ENCODE measurements at regions of chr12 and their contacts with region 1.

Region 1: DNA sequence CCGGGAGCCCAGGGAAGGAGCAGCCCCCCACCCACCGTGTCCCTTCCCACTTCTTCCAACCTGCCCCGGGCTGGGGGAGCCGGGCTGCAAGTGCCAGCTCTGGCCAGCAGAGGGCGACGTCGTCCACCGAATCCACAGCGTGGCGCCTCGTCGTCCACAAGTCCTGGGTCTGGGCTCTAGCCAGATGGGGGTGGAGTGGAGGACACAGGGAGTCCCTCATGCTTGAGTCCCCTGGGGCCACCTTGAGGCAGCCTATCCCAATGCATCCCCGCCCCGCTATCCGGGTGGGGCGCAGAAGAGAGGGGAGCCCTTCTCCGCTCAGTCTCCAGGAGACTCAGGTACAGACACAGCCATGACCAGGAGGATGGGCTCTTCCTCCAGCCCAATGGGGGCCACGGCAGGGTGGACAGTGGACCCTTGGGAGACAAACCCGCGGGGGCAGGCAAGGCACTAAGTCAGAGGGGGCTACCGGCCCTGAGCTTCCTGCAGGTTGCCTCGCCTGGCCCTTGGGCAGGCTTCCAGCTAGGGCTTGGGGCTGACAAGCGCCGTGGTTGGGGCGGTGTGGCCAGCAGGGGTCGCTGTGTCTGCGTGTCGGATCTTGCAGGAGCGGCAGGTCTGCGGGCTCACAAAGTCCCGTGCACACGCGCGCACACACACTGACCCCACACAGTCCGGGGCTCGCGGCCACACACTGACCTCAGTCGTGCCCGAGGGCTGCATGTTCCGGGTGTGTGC is 5.5 kb downstream of the AQP5 start:
- DNase-seq: peak; percentile 83
- H3K4me3 Mint-ChIP-seq: peak overlapping the region; percentile 67
- H3K27ac Mint-ChIP-seq: peak overlapping the region; percentile 69
- H3K4me1 Mint-ChIP-seq: no peaks in the 10 kb centered on the region
- H3K27me3 Mint-ChIP-seq: peaks cover 34% of the 10 kb centered on the region

Region 2: GRCh38 chr12:49776413-49776812 is 190.8 kb before region 1 on chr12:
- intact Hi-C with region 1: loop called (anchors 5 kb)
- DNase-seq: peak; percentile 37
- H3K4me3 Mint-ChIP-seq: no peak overlapping the region
- H3K27ac Mint-ChIP-seq: no peak overlapping the region
- H3K4me1 Mint-ChIP-seq: peaks cover 19% of the 10 kb centered on the region
- H3K27me3 Mint-ChIP-seq: peaks cover 18% of the 10 kb centered on the region

Region 3: GRCh38 chr12:49855005-49855404 is 112.2 kb before region 1 on chr12:
- intact Hi-C with region 1: no loop called
- DNase-seq: no peak
- H3K4me3 Mint-ChIP-seq: no peak overlapping the region
- H3K27ac Mint-ChIP-seq: no peak overlapping the region
- H3K4me1 Mint-ChIP-seq: peaks cover 6% of the 10 kb centered on the region
- H3K27me3 Mint-ChIP-seq: peaks cover 14% of the 10 kb centered on the region

Region 4: GRCh38 chr12:49945394-49946080 is 21.7 kb before region 1 on chr12:
- intact Hi-C with region 1: loop called (anchors 1 kb)
- DNase-seq: peak; percentile 74
- H3K4me3 Mint-ChIP-seq: peak overlapping the region; percentile 77
- H3K27ac Mint-ChIP-seq: peak overlapping the region; percentile 92
- H3K4me1 Mint-ChIP-seq: peaks cover 28% of the 10 kb centered on the region
- H3K27me3 Mint-ChIP-seq: peaks cover 2% of the 10 kb centered on the region

Region 5: GRCh38 chr12:50055831-50056638 is 88.8 kb after region 1 on chr12:
- intact Hi-C with region 1: loop called (anchors 1 kb)
- DNase-seq: peak; percentile 34
- H3K4me3 Mint-ChIP-seq: peak overlapping the region; percentile 45
- H3K27ac Mint-ChIP-seq: peak overlapping the region; percentile 52
- H3K4me1 Mint-ChIP-seq: peaks cover 39% of the 10 kb centered on the region
- H3K27me3 Mint-ChIP-seq: peaks cover 57% of the 10 kb centered on the region

Region 6: DNA sequence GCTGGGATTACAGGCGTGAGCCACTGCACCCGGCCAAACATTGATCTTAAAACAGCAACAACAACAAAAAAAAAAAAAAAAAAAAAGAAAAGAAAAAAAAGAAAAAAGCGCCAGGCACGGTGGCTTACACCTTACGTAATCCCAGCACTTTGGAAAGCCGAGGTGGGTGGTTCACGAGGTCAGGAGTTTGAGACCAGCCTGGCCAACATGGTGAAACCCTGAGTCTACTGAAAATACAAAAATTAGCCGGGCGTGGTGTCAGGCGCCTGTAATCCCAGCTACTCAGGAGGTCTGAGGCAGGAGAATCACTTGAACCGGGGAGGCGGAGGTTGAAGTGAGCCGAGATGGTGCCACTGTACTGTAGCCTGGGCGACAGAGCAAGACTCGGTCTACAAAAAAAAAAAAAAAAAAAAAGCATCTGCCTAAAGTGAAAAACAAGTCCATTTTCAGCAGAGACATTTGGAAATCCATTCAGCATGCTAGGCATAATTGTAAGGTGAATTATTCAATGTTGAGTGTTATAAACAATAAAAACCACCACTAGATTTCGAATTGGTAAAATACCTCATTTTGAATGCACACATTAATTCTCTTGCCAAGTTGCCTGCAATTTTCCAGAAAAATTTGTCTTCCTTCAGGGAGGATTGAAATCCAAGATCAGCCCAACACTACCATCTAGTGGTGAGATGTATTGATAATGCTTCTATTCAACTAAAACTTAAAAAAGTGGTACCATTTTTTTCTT is 207.9 kb after region 1 on chr12:
- intact Hi-C with region 1: loop called (anchors 2 kb)
- DNase-seq: no peak
- H3K4me3 Mint-ChIP-seq: no peak overlapping the region
- H3K27ac Mint-ChIP-seq: no peak overlapping the region
- H3K4me1 Mint-ChIP-seq: peaks cover 1% of the 10 kb centered on the region
- H3K27me3 Mint-ChIP-seq: no peaks in the 10 kb centered on the region

Region 7: DNA sequence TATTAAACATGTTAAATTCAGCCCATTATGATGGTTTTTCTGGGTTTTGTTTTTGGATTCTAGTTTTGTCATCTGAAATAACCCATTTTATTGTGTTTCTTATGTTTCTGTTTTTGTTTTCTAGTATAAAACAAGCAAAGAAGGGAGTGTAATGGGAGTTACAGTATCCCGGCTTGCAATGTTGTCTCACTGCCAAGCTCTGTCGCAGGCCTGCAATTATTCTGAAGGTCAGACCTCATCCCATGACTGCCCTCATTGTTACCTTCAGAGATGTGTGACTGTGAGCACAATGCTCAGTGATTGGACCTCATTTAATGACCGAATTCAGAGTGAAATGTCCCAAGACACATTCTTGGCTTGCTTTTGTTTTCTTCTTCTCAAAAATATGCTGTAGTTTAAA is 723.7 kb after region 1 on chr12:
- intact Hi-C with region 1: no loop called
- DNase-seq: no peak
- H3K4me3 Mint-ChIP-seq: no peak overlapping the region
- H3K27ac Mint-ChIP-seq: no peak overlapping the region
- H3K4me1 Mint-ChIP-seq: no peaks in the 10 kb centered on the region
- H3K27me3 Mint-ChIP-seq: no peaks in the 10 kb centered on the region